ENCODE measurements at regions of chr5 and their contacts with region 1.

Region 1: DNA sequence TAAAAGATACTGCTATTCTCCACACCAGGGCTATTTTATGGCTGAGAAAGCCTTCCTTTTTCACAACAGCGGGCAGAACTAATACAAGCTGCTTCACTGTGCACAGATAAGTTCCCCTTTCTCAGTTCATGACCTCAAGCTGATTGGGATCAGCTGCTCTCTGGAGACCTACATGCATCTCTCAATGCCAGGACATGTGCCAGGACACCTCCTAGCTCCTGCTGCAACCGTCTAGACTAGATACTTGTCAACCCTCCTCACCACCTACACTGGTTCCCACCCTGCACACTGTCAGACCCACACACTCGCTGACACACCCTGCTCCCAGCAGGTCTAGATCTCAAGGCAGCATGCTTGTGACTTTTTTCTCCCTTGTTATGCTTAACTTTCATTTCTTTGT is 39.8 kb downstream of the STARD4 start:
- DNase-seq: no peak
- ATAC-seq: peak in 2 of 4 donors; percentile 33 to 34
- H3K4me3 ChIP-seq: no peak overlapping the region
- H3K27ac ChIP-seq: no peak overlapping the region
- H3K4me1 ChIP-seq: no peaks in the 10 kb centered on the region
- H3K27me3 ChIP-seq: no peaks in the 10 kb centered on the region
- CTCF ChIP-seq: no peak

Region 2: GRCh38 chr5:111172504-111172903 is 300.1 kb before region 1 on chr5:
- intact Hi-C with region 1: loop called in 1 of 3 experiments (anchors 10 kb)
- DNase-seq: peak in 1 of 6 donors; percentile 9
- ATAC-seq: no peak
- H3K4me3 ChIP-seq: no peak overlapping the region
- H3K27ac ChIP-seq: no peak overlapping the region
- H3K4me1 ChIP-seq: no peaks in the 10 kb centered on the region
- H3K27me3 ChIP-seq: no peaks in the 10 kb centered on the region
- CTCF ChIP-seq: no peak

Region 3: DNA sequence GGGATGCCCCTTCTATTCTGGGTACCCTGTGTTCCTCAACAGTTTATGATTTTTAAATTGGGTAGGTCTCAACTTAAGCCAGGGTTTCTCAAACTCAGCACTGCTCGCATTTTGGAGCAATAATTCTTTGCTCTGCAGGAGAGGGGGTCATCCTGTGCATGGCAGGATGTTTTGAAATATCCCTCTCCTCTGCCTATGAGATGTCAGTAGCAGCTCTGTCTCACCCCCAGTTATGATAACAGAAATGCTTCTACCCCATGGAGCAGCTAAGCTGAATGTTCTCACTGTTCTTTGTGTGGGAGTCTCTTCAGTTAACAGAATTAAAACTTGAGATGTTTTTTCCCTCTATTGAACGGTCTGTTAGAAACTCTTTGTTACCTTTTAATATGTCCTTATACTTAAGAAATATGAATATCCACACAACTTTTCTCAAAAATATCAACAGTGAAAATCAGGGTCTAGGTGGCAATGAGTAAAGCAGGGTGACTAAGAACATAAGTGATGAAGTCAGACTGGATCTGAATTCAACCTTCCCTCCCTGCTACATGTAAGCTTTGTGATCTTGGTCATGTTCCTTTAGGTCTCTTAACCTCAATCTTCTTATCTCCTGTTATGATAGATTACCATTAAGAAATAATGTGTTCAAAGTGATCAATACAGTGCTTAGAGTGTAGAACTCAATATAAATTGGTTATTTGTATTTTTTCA is 159.4 kb before region 1 on chr5:
- intact Hi-C with region 1: no loop called
- DNase-seq: no peak
- ATAC-seq: no peak
- H3K4me3 ChIP-seq: no peak overlapping the region
- H3K27ac ChIP-seq: no peak overlapping the region
- H3K4me1 ChIP-seq: no peaks in the 10 kb centered on the region
- H3K27me3 ChIP-seq: no peaks in the 10 kb centered on the region
- CTCF ChIP-seq: no peak